MCF 10A (cell line): ENCODE measurements at regions of chr15 and their contacts with region 1.

Region 1: GRCh38 chr15:67456677-67457529 is 64.0 kb upstream of the C15orf61 start:
- DNase-seq: peak; percentile 74
- H3K4me3 Mint-ChIP-seq: no peak overlapping the region
- H3K27ac Mint-ChIP-seq: no peak overlapping the region
- H3K4me1 Mint-ChIP-seq: no peaks in the 10 kb centered on the region
- H3K27me3 Mint-ChIP-seq: no peaks in the 10 kb centered on the region
- CTCF ChIP-seq: peak; percentile 91

Region 2: DNA sequence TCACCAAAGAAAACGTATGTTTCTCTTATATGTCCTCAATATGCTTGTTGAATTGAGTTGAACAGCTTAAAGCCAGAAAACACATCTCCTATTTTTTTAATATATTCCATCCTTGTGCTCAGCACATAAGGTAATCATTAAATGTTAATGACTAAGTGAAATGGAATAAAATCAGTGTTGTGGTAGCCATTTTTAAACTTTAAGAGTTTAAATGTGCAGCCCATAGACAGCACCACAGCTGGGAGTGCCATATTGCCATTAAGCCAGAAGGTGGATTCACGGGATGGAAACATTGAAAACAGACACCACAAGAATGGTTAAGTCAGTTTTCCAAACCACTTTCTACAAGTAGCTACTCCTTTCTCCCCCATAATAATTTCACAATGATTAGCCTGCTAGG is 12.8 kb before region 1 on chr15:
- CTCF ChIA-PET with region 1: interaction called, 11 read pairs
- POLR2A ChIA-PET with region 1: interaction called, 11 read pairs
- intact Hi-C with region 1: no loop called
- DNase-seq: no peak
- H3K4me3 Mint-ChIP-seq: no peak overlapping the region
- H3K27ac Mint-ChIP-seq: no peak overlapping the region
- H3K4me1 Mint-ChIP-seq: no peaks in the 10 kb centered on the region
- H3K27me3 Mint-ChIP-seq: no peaks in the 10 kb centered on the region
- CTCF ChIP-seq: no peak